IMR-90 (cell line): ENCODE measurements at regions of chr4 and their contacts with region 1.

Region 1: DNA sequence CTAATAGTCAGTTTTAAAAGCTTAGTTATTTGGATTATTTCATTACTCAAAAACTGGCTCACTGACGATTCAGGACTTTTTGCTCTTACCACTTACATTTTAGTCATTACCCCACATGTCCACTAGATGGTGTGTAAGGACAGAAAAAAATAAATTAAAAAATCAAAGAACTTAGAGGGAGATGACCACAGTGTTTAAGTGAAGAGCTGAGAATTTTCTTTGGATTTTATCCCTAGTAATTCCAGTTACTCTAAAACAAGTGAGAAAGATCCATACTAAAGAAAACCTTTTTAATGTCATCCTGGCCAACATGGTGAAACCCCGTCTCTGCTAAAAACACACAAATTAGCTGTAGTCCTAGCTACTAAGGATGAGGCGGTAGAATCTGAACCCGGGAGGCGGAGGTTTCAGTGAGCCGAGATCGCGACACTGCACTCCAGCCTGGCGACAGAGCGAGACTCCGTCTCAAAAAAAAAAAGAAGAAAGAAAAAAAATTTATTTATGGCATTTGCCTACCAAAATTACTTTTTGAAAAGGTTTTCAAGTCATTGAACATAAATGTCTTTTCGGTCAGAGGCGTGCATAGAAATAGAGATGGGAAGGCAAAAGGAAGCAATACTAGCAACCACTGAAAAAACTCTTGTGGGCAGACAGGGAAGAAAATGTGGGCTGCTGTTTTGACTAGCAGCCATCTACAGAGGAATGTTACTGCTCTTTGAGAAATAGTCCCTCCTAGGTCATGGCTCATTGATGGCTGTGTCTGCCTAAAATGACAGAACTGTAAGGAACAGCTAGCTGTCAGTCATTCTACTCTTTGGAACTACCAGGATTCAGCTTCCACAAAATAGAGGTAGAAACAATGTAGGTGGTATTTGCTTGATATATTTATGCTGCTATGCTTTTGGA is 26.6 kb upstream of the TMPRSS11B start:
- DNase-seq: peak; percentile 73
- ATAC-seq: peak; percentile 87
- H3K4me3 ChIP-seq: peak overlapping the region; percentile 54
- H3K27ac ChIP-seq: no peak overlapping the region
- H3K4me1 ChIP-seq: 0 out of 2 replicates have a peak, but pooled peaks cover 3% of the 10 kb centered on the region
- H3K27me3 ChIP-seq: no peaks in the 10 kb centered on the region
- CTCF ChIP-seq: peak; percentile 77
- POLR2A ChIP-seq: no peak
- RAD21 ChIP-seq: peak; percentile 67

Region 2: GRCh38 chr4:68349649-68350360 is 77.7 kb after region 1 on chr4 and contains the start of gene YTHDC1:
- CTCF ChIA-PET with region 1: no interaction called
- POLR2A ChIA-PET with region 1: no interaction called
- dilution Hi-C with region 1: no loop called
- in situ Hi-C with region 1: no loop called
- intact Hi-C with region 1: loop called (anchors 2 kb)
- DNase-seq: peak; percentile 96
- ATAC-seq: peak; percentile 97
- H3K4me3 ChIP-seq: peak within 1 kb of the TSS; percentile 78
- H3K27ac ChIP-seq: peak within 1 kb of the TSS; percentile 86
- H3K4me1 ChIP-seq: peaks cover under 1% of the 10 kb centered on the region; the same call in 1 of the 2 replicates
- H3K27me3 ChIP-seq: no peaks in the 10 kb centered on the region
- CTCF ChIP-seq: 0 out of 2 replicates have a peak, but pooled peaks have one; percentile 10
- POLR2A ChIP-seq: peak; percentile 93
- RAD21 ChIP-seq: no peak
- total RNA-seq, gene YTHDC1: 31.9 and 43.9 TPM in 2 replicates

Region 3: DNA sequence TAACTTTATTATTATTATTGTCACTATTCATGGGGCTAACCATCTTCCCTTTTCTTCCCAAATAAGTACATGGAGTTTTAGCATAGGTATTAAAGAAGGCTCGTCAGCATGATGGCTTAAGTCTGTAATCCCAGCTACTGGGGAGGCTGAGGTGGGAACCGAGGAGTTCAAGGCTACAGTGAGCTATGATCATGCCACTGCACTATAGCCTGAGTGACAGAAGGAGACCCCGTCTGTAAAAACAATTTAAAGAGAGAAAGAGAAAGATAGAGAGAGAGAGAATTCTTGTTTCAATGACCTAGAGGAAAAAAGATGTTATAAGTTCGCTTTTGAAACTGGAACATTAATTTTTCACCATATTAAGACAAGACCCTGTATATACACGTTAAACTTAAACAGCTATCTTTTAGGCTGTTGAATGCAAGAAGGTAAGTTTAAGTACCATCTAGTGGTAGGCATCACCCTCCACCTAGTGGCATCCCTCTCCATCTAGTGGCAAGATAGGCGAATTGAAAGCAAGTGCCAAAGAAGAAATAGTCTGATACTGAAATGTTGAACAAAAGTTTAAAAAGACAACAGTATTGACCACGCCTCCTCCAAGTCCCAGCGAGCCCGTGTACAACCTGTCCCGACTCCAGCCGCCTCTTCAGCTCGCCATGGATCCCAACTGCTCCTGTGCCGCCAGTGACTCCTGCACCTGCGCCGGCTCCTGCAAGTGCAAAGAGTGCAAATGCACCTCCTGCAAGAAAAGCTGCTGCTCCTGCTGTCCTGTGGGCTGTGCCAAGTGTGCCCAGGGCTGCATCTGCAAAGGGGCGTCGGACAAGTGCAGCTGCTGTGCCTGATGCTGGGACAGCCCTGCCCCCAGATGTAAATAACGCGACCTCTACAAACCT is 103.8 kb after region 1 on chr4:
- CTCF ChIA-PET with region 1: interaction called, 27 read pairs
- POLR2A ChIA-PET with region 1: no interaction called
- dilution Hi-C with region 1: no loop called
- in situ Hi-C with region 1: loop called (anchors 5 kb)
- intact Hi-C with region 1: loop called (anchors 1 kb)
- DNase-seq: peak; percentile 64
- ATAC-seq: peak; percentile 77
- H3K4me3 ChIP-seq: no peak overlapping the region
- H3K27ac ChIP-seq: no peak overlapping the region
- H3K4me1 ChIP-seq: peaks cover 9% of the 10 kb centered on the region
- H3K27me3 ChIP-seq: no peaks in the 10 kb centered on the region
- CTCF ChIP-seq: peak; percentile 96
- POLR2A ChIP-seq: no peak
- RAD21 ChIP-seq: peak; percentile 91

Region 4: DNA sequence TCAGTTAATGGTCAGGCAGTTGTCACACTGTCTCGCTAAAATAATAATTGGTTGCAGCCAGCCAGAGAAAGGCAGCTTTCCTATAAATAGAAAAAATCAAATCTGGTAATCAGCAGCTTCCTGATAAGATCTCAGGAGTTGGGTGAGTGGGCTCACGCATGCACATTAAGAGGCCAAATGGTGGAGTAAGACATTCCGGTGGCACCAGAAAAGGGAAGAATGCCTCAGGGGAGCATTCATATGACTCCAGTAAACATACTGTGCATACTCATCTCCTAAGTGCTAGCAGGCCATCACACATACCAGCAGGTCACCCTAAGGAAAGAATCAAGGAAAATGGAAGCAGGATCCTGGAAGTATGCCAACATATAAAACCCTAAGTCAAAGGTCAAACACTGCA is 358.3 kb after region 1 on chr4:
- CTCF ChIA-PET with region 1: no interaction called
- POLR2A ChIA-PET with region 1: no interaction called
- dilution Hi-C with region 1: no loop called
- in situ Hi-C with region 1: loop called (anchors 25 kb)
- intact Hi-C with region 1: no loop called
- DNase-seq: no peak
- ATAC-seq: no peak
- H3K4me3 ChIP-seq: no peak overlapping the region
- H3K27ac ChIP-seq: no peak overlapping the region
- H3K4me1 ChIP-seq: no peaks in the 10 kb centered on the region
- H3K27me3 ChIP-seq: no peaks in the 10 kb centered on the region
- CTCF ChIP-seq: no peak
- POLR2A ChIP-seq: no peak
- RAD21 ChIP-seq: no peak

Region 5: DNA sequence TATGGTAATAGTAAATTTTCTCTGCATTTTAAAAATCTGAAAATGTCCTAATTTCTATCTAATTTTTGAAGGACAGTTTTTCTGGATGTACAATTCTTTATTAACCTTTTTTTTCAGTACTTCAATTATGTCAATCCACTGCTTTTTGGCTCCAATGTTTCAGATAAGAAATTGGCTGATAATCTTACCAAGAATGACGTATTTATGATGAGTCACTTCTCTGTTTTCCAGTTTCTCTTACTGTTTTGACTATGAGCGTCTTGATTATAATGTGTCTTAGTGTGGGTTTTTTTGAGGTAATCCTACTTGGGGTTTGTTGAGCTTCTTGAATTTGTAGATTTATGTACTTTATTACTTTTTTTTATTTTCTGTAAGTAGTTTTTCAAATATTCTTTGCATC is 895.2 kb after region 1 on chr4:
- CTCF ChIA-PET with region 1: no interaction called
- POLR2A ChIA-PET with region 1: no interaction called
- dilution Hi-C with region 1: no loop called
- in situ Hi-C with region 1: loop called (anchors 25 kb)
- intact Hi-C with region 1: loop called (anchors 1 kb)
- DNase-seq: peak; percentile 2
- ATAC-seq: no peak
- H3K4me3 ChIP-seq: no peak overlapping the region
- H3K27ac ChIP-seq: no peak overlapping the region
- H3K4me1 ChIP-seq: no peaks in the 10 kb centered on the region
- H3K27me3 ChIP-seq: no peaks in the 10 kb centered on the region
- CTCF ChIP-seq: no peak
- POLR2A ChIP-seq: no peak
- RAD21 ChIP-seq: no peak